Endothelial cell of umbilical vein (primary cell): ENCODE measurements at regions of chr1 and their contacts with region 1.

Region 1: DNA sequence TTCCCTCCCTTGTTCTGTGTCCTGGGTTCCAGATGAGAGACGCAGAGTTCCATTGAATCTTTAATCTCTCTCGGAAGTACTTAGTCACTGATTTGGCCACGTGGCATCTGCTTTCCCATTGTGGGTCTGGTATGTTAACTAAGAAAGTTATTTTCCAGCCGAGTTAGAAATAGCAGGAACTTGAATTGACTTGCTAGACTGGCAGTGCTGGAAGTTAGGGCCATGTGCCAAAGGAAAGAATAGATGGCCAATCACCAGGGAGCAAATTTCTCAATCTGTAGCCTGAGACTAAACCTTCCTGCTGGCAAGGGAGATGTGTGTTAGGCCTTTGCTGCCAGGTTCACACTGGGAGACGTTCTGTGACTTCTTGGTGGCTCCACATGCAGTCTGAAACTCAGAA is 24.2 kb upstream of the SLFNL1 start:
- DNase-seq: peak; percentile 94
- H3K4me3 ChIP-seq: no peak overlapping the region
- H3K27ac ChIP-seq: peak overlapping the region; percentile 53
- H3K4me1 ChIP-seq: peaks cover 32% of the 10 kb centered on the region
- H3K27me3 ChIP-seq: no peaks in the 10 kb centered on the region
- CTCF ChIP-seq: no peak
- POLR2A ChIP-seq: no peak

Region 2: DNA sequence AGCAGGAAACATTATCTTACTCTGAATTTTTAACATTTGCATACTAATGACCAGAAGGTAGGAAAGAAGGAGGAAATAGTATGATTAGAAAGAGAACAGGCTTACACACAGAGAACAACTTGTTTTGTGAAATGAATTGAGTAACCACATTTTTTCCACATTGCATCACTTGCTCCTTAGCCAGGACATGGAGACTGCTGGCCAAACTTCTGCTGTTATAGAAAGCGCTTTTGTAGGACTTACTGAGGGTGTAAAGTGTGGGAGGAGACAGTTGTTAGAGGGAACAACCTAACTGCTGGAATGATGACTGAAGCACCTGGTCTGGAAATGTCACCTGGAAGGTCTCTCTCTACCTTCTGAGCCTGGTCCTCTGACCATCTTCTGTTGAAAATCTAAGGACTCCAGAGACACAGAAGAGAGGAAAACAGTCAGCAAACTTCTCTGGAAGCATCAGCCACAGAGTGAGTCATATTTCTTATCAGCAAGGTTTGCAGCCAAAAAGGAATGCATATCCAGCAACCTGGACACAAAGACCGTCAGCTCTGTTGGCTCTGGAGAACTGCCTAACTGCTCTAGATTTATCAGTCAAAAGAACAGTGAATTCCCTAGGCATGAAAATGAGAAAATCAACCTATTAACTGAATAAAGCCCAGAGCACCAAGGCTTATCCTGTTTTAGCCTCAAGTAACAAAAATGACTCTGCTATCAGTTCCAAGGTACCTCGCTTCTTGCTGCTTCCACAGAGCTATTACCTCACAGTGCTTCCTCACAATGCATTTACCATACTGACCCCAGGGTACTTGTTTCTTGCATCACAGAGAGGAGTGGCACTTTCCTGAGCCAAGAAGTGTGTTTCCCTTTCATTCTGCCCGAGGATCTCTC is 63.8 kb after region 1 on chr1:
- CTCF ChIA-PET with region 1: interaction called, 3 read pairs
- POLR2A ChIA-PET with region 1: no interaction called
- dilution Hi-C with region 1: no loop called
- intact Hi-C with region 1: loop called (anchors 2 kb)
- DNase-seq: peak; percentile 95
- H3K4me3 ChIP-seq: peak overlapping the region in 1 of 3 experiments; percentile 59
- H3K27ac ChIP-seq: peak overlapping the region; percentile 95
- H3K4me1 ChIP-seq: peaks cover 27% of the 10 kb centered on the region
- H3K27me3 ChIP-seq: no peaks in the 10 kb centered on the region
- CTCF ChIP-seq: no peak
- POLR2A ChIP-seq: no peak